K562 (cell line): ENCODE measurements at regions of chr10 and their contacts with region 1.

Region 1: DNA sequence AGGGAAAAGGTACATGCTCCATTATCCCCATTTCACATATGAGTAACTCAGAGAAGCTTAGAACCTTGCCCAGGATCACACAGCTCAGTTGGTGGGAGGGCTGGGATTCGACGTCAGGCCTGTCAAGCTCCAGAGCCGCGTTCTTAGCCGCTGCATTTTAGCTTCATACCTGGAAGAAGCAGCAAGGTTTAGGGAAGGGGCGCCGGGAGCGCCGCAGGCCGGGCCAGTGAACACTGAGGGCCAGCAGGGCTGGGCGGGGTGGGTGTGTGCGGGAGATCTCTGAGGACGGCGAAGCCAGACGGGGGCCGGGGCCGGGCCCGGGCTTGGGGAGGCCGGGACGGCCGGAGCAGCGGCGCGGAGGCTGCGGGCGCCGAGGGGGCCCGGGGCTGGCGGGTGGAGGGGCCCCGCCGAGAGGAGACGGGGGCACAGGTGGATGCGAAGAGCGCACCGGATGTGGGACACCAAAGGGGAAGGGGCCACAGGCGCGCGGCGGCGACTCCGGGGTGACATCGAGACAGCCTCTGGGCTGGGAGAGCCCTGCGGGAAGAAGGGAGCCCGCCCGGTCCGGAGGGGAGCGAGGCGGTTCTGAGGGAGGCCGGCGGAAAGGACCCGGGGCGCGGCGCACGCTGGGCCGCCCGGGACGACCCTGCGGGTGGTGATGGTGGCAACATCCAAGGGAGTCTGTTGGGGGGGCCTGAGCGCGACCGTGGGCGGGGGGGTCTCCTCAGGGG is 498 bp downstream of the NDST2 start:
- DNase-seq: peak; percentile 65 to 87 (median 70)
- ATAC-seq: peak; percentile 57
- H3K4me3 ChIP-seq: peak overlapping the region; percentile 85
- H3K27ac ChIP-seq: peak overlapping the region; percentile 85
- H3K4me1 ChIP-seq: peaks cover 30 to 48% of the 10 kb centered on the region in 2 experiments
- H3K27me3 ChIP-seq: no peaks in the 10 kb centered on the region
- CTCF ChIP-seq: no peak
- EP300 ChIP-seq: no peak
- POLR2A ChIP-seq: no peak
- RAD21 ChIP-seq: no peak

Region 2: GRCh38 chr10:72935361-72935760 is 875.5 kb before region 1 on chr10:
- CTCF ChIA-PET with region 1: no interaction called
- POLR2A ChIA-PET with region 1: no interaction called
- in situ Hi-C with region 1: no loop called
- intact Hi-C with region 1: no loop called
- DNase-seq: peak in 1 of 4 experiments; percentile 34
- ATAC-seq: no peak
- H3K4me3 ChIP-seq: no peak overlapping the region
- H3K27ac ChIP-seq: no peak overlapping the region
- H3K4me1 ChIP-seq: peaks cover 4 to 14% of the 10 kb centered on the region in 2 experiments
- H3K27me3 ChIP-seq: 0 out of 5 replicates have a peak, but pooled peaks cover 0 to 5% of the 10 kb centered on the region in 2 experiments
- CTCF ChIP-seq: no peak
- EP300 ChIP-seq: no peak
- POLR2A ChIP-seq: no peak
- RAD21 ChIP-seq: no peak

Region 3: GRCh38 chr10:73723516-73723915 is 87.4 kb before region 1 on chr10:
- CTCF ChIA-PET with region 1: no interaction called
- POLR2A ChIA-PET with region 1: no interaction called
- in situ Hi-C with region 1: no loop called
- intact Hi-C with region 1: no loop called
- DNase-seq: no peak
- ATAC-seq: no peak
- H3K4me3 ChIP-seq: no peak overlapping the region
- H3K27ac ChIP-seq: no peak overlapping the region
- H3K4me1 ChIP-seq: no peaks in the 10 kb centered on the region
- H3K27me3 ChIP-seq: no peaks in the 10 kb centered on the region
- CTCF ChIP-seq: no peak
- EP300 ChIP-seq: no peak
- POLR2A ChIP-seq: no peak
- RAD21 ChIP-seq: no peak

Region 4: DNA sequence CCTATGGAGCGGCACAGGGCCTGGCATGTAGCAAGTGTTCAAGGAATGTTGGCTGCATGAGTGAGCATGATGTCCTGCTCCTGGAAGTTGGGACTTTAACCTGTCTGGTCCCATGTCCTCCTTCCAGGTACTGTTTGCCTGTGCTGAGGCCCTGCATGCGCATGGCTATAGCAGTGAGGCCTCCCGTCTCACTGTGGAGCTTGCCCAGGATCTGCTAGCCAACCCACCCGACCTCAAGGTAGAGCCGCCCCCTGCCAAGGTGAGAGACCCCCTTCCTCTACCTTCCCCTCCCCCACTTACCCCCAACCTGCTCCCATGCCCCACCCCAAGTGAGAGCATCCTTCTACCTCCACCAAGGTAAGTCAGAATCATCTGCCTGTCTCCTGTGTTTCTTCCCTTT is 17.4 kb before region 1 on chr10:
- CTCF ChIA-PET with region 1: no interaction called
- POLR2A ChIA-PET with region 1: interaction called, 50 read pairs
- in situ Hi-C with region 1: no loop called
- intact Hi-C with region 1: no loop called
- DNase-seq: no peak
- ATAC-seq: no peak
- H3K4me3 ChIP-seq: no peak overlapping the region
- H3K27ac ChIP-seq: no peak overlapping the region
- H3K4me1 ChIP-seq: no peaks in the 10 kb centered on the region; a peak in 1 of 5 replicates
- H3K27me3 ChIP-seq: no peaks in the 10 kb centered on the region
- CTCF ChIP-seq: no peak
- EP300 ChIP-seq: no peak
- POLR2A ChIP-seq: no peak
- RAD21 ChIP-seq: no peak

Region 5: GRCh38 chr10:73798927-73799563 is 11.9 kb before region 1 on chr10:
- CTCF ChIA-PET with region 1: no interaction called
- POLR2A ChIA-PET with region 1: interaction called, 50 read pairs
- in situ Hi-C with region 1: no loop called
- intact Hi-C with region 1: no loop called
- DNase-seq: no peak
- ATAC-seq: peak; percentile 19
- H3K4me3 ChIP-seq: no peak overlapping the region
- H3K27ac ChIP-seq: no peak overlapping the region
- H3K4me1 ChIP-seq: peaks cover 0 to 10% of the 10 kb centered on the region in 2 experiments; a peak in 2 of 5 replicates
- H3K27me3 ChIP-seq: no peaks in the 10 kb centered on the region
- CTCF ChIP-seq: no peak
- EP300 ChIP-seq: no peak
- POLR2A ChIP-seq: peak; percentile 22
- RAD21 ChIP-seq: no peak

Region 6: DNA sequence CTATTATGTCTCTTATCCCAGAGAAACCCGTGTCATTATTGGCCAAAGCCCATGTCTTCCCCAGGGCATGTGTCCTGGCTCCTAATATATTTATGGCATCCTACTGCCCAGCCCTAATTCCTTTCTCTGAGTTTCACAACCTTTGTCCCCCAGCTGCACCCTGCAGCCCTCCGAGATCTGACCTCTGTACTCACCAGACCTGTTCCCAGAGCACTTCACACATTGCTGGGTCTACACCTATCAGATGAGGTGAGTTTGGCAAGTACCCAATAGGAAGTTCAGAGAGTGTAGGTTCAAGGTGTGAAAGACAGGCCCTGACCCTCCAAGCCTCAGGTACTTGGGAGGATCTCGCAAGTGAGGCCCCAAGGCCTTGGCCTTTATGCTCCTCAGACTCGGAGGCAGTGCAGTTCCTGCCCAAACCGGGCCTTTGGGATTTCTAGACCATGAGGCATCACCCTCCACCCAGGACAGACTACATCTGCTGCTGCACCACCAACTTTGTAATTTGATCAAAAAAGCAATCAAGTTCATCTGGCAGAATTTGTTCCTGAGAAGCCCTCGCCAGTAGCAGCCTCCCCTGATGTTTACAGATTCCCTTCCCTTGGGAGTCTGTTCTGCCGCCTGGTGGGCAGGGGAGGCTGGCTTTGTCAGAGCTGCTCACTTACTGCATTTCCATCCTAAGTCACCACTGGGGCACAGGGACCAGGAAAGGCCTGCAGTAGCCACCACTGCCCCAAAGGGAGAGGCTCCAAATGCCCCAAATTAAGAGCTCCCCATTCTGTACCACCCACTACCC is 61.2 kb after region 1 on chr10:
- CTCF ChIA-PET with region 1: no interaction called
- POLR2A ChIA-PET with region 1: no interaction called
- in situ Hi-C with region 1: no loop called
- intact Hi-C with region 1: no loop called
- DNase-seq: no peak
- ATAC-seq: no peak
- H3K4me3 ChIP-seq: no peak overlapping the region
- H3K27ac ChIP-seq: no peak overlapping the region
- H3K4me1 ChIP-seq: peaks cover 16 to 23% of the 10 kb centered on the region in 2 experiments
- H3K27me3 ChIP-seq: no peaks in the 10 kb centered on the region
- CTCF ChIP-seq: no peak
- EP300 ChIP-seq: no peak
- POLR2A ChIP-seq: no peak
- RAD21 ChIP-seq: no peak